Right lobe of liver (tissue), 6 donors: ENCODE measurements at regions of chr17 and their contacts with region 1.

Region 1: GRCh38 chr17:50026901-50027630 is 28.8 kb upstream of the ITGA3 start:
- DNase-seq: peak; percentile 76 to 82 (median 80)
- ATAC-seq: peak; percentile 88 to 97 (median 92)
- H3K4me3 ChIP-seq: no peak overlapping the region
- H3K27ac ChIP-seq: no peak overlapping the region
- H3K4me1 ChIP-seq: no peaks in the 10 kb centered on the region
- H3K27me3 ChIP-seq: peaks cover 0 to 8% of the 10 kb centered on the region in 2 donors
- CTCF ChIP-seq: peak; percentile 89 to 98 (median 96)
- POLR2A ChIP-seq: no peak

Region 2: GRCh38 chr17:50079334-50080095 is 52.4 kb after region 1 on chr17:
- intact Hi-C with region 1: loop called in 1 of 2 experiments (anchors 10 kb)
- DNase-seq: peak in 1 of 3 donors; percentile 52
- ATAC-seq: peak in 1 of 4 donors; percentile 59
- H3K4me3 ChIP-seq: no peak overlapping the region
- H3K27ac ChIP-seq: no peak overlapping the region
- H3K4me1 ChIP-seq: no peaks in the 10 kb centered on the region
- H3K27me3 ChIP-seq: no peaks in the 10 kb centered on the region
- CTCF ChIP-seq: no peak
- POLR2A ChIP-seq: no peak

Region 3: DNA sequence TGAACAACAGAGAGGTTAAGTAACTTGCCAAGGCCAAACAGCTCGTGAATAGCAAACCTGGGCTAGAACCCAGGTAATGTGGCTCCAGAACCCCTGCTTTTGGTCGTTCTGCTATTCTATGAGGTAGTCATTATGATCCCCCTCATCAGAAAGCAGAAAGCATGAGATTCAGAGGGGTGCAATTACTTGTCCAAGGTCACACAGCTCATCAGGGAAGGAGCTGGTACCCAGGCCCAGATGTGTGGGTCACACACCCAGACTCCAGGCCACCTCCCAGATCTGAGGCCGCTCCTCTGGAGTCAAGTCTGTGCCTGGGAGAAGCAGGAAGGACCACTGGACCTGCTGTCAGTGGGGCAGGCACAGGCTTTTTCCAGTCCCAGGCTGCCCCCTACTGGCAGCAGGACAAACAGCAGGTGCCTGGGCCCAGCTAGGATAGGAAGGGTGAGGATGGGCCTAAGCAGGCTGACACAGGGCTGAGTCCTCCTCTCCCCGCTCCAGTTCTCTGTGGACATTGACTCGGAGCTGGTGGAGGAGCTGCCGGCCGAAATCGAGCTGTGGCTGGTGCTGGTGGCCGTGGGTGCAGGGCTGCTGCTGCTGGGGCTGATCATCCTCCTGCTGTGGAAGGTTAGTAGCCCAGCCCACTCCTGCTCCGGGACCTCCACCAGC is 60.3 kb after region 1 on chr17:
- intact Hi-C with region 1: loop called (anchors 5 kb)
- DNase-seq: peak; percentile 68 to 76 (median 72)
- ATAC-seq: peak; percentile 88 to 94 (median 92)
- H3K4me3 ChIP-seq: no peak overlapping the region
- H3K27ac ChIP-seq: no peak overlapping the region
- H3K4me1 ChIP-seq: no peaks in the 10 kb centered on the region
- H3K27me3 ChIP-seq: no peaks in the 10 kb centered on the region
- CTCF ChIP-seq: peak; percentile 90 to 95 (median 94)
- POLR2A ChIP-seq: no peak

Region 4: GRCh38 chr17:50094753-50095619 is 67.9 kb after region 1 on chr17 and contains the start of gene PDK2:
- intact Hi-C with region 1: loop called in 1 of 2 experiments (anchors 5 kb)
- DNase-seq: peak; percentile 96 to 98 (median 98)
- ATAC-seq: peak; percentile 93 to 95 (median 94)
- H3K4me3 ChIP-seq: peak within 1 kb of the TSS; percentile 83 to 90 (median 84)
- H3K27ac ChIP-seq: peak within 1 kb of the TSS; percentile 71 to 89 (median 87)
- H3K4me1 ChIP-seq: peaks cover 0 to 34% (median 4%) of the 10 kb centered on the region in 4 donors
- H3K27me3 ChIP-seq: no peaks in the 10 kb centered on the region
- CTCF ChIP-seq: peak in 1 of 4 donors; percentile 4
- POLR2A ChIP-seq: peak; percentile 60
- total RNA-seq, gene PDK2: 25.0 to 58.0 (median 44.8) TPM